Ascending aorta (tissue), 2 donors: ENCODE measurements at regions of chr10 and their contacts with region 1.

Region 1: DNA sequence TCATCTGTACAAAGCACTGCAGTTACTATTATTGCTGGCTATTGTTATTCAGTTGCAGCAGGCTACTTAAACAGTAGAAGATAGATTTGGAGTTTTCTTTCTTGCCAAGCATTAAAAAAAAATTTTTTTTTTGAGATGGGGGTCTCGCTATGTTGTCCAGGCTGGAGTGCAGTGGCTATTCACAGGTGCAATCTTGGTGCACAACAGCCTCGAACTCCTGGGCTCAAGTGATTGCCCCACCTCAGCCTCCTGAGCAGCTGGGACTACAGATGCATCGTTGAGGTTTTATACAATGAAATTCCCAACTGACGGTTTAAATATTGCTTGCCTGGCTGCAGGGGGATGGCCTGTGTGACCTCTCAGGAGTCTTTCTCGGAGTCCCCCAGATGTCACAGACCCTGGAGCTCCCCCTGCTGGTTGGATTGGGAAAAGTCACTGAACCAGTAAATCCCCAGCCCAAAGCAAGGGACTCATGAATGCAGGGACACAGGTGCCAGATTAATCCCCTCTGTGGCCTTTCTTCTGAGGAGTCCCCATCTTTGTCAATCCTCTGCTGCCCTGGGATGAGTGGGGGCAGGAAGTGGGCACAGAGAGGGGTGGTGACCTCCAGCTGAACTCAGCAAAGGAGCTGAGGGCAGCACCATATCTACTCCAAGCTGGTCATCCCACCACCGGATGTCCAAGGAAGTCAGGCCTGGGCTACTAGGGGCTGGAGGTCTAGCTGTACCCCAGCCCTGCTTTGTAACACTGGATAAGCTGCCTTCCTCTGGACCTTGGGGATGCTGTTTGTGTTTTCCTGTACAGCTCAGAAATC is 149.6 kb downstream of the C10orf105 start:
- DNase-seq: peak in 1 of 2 donors; percentile 83
- H3K4me3 ChIP-seq: no peak overlapping the region
- H3K27ac ChIP-seq: no peak overlapping the region
- H3K4me1 ChIP-seq: no peaks in the 10 kb centered on the region
- H3K27me3 ChIP-seq: no peaks in the 10 kb centered on the region
- CTCF ChIP-seq: peak; percentile 62 to 84 (median 69)

Region 2: GRCh38 chr10:70267161-70267933 is 1302.6 kb before region 1 on chr10:
- intact Hi-C with region 1: loop called (anchors 10 kb)
- DNase-seq: no peak
- H3K4me3 ChIP-seq: no peak overlapping the region
- H3K27ac ChIP-seq: no peak overlapping the region
- H3K4me1 ChIP-seq: no peaks in the 10 kb centered on the region
- H3K27me3 ChIP-seq: no peaks in the 10 kb centered on the region
- CTCF ChIP-seq: no peak

Region 3: GRCh38 chr10:71314028-71314693 is 255.8 kb before region 1 on chr10:
- intact Hi-C with region 1: loop called (anchors 1 kb)
- DNase-seq: peak in 1 of 2 donors; percentile 72
- H3K4me3 ChIP-seq: no peak overlapping the region
- H3K27ac ChIP-seq: no peak overlapping the region
- H3K4me1 ChIP-seq: peaks cover 0 to 5% of the 10 kb centered on the region in 2 donors
- H3K27me3 ChIP-seq: no peaks in the 10 kb centered on the region
- CTCF ChIP-seq: peak; percentile 77 to 94 (median 87)

Region 4: DNA sequence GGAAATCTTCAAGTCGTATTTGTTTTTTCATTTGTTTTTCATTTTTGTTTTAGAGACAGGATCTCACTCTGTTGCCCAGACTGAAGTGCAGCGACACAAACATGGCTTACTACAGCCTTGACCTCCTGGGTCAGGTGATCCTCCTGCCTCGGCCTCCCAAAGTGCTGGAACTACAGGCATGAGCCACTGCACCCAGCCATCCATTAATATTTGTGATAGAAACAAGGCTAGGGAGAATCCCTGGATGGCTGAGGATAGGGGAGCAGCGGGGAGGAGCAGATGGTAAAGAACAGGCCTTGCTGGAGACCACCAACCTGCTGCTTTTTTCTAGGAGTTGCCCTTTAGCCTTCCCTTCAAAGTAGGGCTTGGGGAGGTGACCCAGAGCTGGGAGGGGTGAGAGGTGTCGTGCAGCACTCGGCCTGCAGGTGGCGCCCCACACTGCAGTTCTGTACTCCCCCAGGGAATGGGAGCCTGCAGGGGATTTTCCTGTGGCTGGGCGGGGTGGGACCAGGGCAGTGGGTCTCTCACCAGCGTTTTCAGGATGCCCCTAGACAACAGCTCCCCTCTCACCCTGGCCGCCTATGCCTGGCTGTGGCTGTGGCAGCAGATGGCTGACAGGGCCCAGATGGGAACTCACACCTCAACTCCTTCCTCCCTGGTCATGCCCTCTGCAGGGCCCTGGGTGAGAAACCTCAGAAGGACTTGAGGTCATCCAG is 185.9 kb before region 1 on chr10:
- intact Hi-C with region 1: loop called (anchors 1 kb)
- DNase-seq: peak in 1 of 2 donors; percentile 79
- H3K4me3 ChIP-seq: no peak overlapping the region
- H3K27ac ChIP-seq: no peak overlapping the region
- H3K4me1 ChIP-seq: no peaks in the 10 kb centered on the region
- H3K27me3 ChIP-seq: no peaks in the 10 kb centered on the region
- CTCF ChIP-seq: peak; percentile 84 to 91 (median 90)

Region 5: DNA sequence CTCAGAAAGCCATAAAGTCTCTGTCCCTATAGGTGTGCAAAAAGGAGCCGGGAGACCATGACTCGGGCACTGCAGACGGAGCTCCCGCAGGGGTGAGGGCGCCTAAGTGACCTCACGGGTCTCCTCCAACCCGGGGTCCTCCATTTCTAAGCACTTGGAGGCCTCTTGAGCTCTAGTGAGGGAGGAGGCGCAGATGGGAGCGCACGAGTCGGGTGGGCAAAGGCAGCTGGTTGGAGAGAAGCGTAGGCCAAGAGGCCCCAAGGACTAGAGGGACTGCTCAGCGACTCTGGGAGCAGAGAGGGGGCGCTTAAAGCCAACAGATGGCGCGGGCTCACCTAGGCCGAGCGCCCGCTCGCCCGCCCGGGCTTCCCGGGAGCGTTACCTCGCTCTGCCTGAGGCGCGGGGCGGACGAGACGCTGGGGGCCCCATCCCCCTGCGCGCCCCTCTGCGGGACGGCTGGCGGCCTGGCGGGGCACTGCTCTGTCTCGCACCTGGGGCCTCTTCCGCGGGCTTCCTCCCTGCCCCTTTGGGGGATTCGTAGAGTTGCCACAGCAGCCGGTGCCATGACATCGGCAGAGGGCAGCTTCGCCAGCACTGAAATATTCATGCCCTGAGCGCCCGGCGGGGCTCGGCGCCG is 173.8 kb before region 1 on chr10:
- intact Hi-C with region 1: loop called (anchors 2 kb)
- DNase-seq: no peak
- H3K4me3 ChIP-seq: peak overlapping the region; percentile 51 to 69
- H3K27ac ChIP-seq: no peak overlapping the region
- H3K4me1 ChIP-seq: peaks cover 10 to 17% of the 10 kb centered on the region in 2 donors
- H3K27me3 ChIP-seq: peaks cover 3% of the 10 kb centered on the region
- CTCF ChIP-seq: peak; percentile 17 to 46 (median 29)

Region 6: GRCh38 chr10:71860243-71861029 is 290.5 kb after region 1 on chr10:
- intact Hi-C with region 1: no loop called
- DNase-seq: peak; percentile 97 to 99
- H3K4me3 ChIP-seq: no peak overlapping the region
- H3K27ac ChIP-seq: peak overlapping the region; percentile 94 to 99
- H3K4me1 ChIP-seq: peaks cover 10 to 21% of the 10 kb centered on the region in 2 donors
- H3K27me3 ChIP-seq: no peaks in the 10 kb centered on the region
- CTCF ChIP-seq: no peak